HepG2 (cell line): ENCODE measurements at regions of chr10 and their contacts with region 1.

Region 1: GRCh38 chr10:110959379-110960332 is 40.3 kb downstream of the SHOC2 start:
- DNase-seq: no peak
- ATAC-seq: no peak
- H3K4me3 ChIP-seq: no peak overlapping the region
- H3K27ac ChIP-seq: no peak overlapping the region
- H3K4me1 ChIP-seq: no peaks in the 10 kb centered on the region
- H3K27me3 ChIP-seq: no peaks in the 10 kb centered on the region
- CTCF ChIP-seq: no peak
- EP300 ChIP-seq: no peak
- POLR2A ChIP-seq: no peak
- RAD21 ChIP-seq: no peak

Region 2: GRCh38 chr10:111004016-111004415 is 44.4 kb after region 1 on chr10:
- CTCF ChIA-PET with region 1: no interaction called
- POLR2A ChIA-PET with region 1: no interaction called
- in situ Hi-C with region 1: no loop called
- intact Hi-C with region 1: loop called (anchors 1 kb)
- DNase-seq: no peak
- ATAC-seq: no peak
- H3K4me3 ChIP-seq: no peak overlapping the region
- H3K27ac ChIP-seq: no peak overlapping the region
- H3K4me1 ChIP-seq: no peaks in the 10 kb centered on the region
- H3K27me3 ChIP-seq: no peaks in the 10 kb centered on the region
- CTCF ChIP-seq: no peak
- EP300 ChIP-seq: no peak
- POLR2A ChIP-seq: no peak
- RAD21 ChIP-seq: no peak

Region 3: DNA sequence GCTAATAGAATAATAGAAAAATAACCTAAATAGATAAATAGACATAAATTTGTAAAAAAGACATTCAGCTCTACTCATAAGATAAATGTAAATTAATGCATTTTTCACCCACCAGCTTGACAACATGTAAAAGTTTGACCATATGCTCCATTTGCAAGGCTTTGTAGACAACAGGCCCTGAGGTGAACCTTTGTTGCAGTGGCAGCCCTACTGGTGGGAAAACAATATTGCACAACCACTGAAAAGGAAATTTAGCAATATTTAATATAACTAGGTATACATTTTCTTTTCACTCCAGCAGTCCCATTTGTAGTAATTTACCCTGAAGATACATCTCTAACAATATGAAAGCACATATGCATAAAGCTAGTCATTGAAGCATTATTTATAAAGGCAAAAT is 78.2 kb after region 1 on chr10:
- CTCF ChIA-PET with region 1: no interaction called
- POLR2A ChIA-PET with region 1: no interaction called
- in situ Hi-C with region 1: no loop called
- intact Hi-C with region 1: no loop called
- DNase-seq: no peak
- ATAC-seq: 0 out of 3 replicates have a peak, but pooled peaks have one; percentile 30
- H3K4me3 ChIP-seq: no peak overlapping the region
- H3K27ac ChIP-seq: no peak overlapping the region
- H3K4me1 ChIP-seq: no peaks in the 10 kb centered on the region
- H3K27me3 ChIP-seq: no peaks in the 10 kb centered on the region
- CTCF ChIP-seq: no peak
- EP300 ChIP-seq: no peak
- POLR2A ChIP-seq: no peak
- RAD21 ChIP-seq: no peak